CD14-positive monocyte (primary cell): ENCODE measurements at regions of chr17 and their contacts with region 1.

Region 1: GRCh38 chr17:59914274-59914854 is 21.4 kb downstream of the RPS6KB1 start:
- DNase-seq: peak; percentile 15 to 54 (median 37)
- H3K4me3 ChIP-seq: no peak overlapping the region
- H3K4me3 Mint-ChIP-seq: no peak overlapping the region
- H3K27ac ChIP-seq: no peak overlapping the region
- H3K27ac Mint-ChIP-seq: no peak overlapping the region
- H3K4me1 ChIP-seq: no peaks in the 10 kb centered on the region
- H3K4me1 Mint-ChIP-seq: peaks cover 1% of the 10 kb centered on the region
- H3K27me3 ChIP-seq: no peaks in the 10 kb centered on the region
- H3K27me3 Mint-ChIP-seq: no peaks in the 10 kb centered on the region
- CTCF ChIP-seq: peak; percentile 77

Region 2: DNA sequence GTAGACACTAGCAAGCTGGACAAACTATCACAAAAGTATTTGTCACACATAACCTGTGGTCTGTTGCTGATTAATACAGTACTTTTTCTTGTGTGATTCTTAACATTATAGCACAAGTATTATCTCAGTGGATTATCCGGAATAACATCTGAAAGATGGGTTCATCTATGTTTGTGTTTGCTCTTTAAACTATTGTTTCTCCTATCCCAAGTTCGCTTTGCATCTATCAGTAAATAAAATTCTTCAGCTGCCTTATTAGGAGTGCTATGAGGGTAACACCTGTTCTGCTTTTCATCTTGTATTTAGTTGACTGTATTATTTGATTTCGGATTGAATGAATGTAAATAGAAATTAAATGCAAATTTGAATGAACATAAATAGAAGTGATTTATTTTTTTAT is 35.7 kb after region 1 on chr17:
- intact Hi-C with region 1: loop called in 1 of 2 experiments (anchors 5 kb)
- DNase-seq: no peak
- H3K4me3 ChIP-seq: no peak overlapping the region
- H3K4me3 Mint-ChIP-seq: no peak overlapping the region
- H3K27ac ChIP-seq: no peak overlapping the region
- H3K27ac Mint-ChIP-seq: no peak overlapping the region
- H3K4me1 ChIP-seq: no peaks in the 10 kb centered on the region
- H3K4me1 Mint-ChIP-seq: no peaks in the 10 kb centered on the region
- H3K27me3 ChIP-seq: no peaks in the 10 kb centered on the region
- H3K27me3 Mint-ChIP-seq: no peaks in the 10 kb centered on the region
- CTCF ChIP-seq: no peak

Region 3: GRCh38 chr17:60036796-60037612 is 122.6 kb after region 1 on chr17:
- intact Hi-C with region 1: loop called (anchors 5 to 10 kb)
- DNase-seq: peak; percentile 46 to 58 (median 53)
- H3K4me3 ChIP-seq: no peak overlapping the region
- H3K4me3 Mint-ChIP-seq: peak overlapping the region in 1 of 2 donors; percentile 74
- H3K27ac ChIP-seq: no peak overlapping the region
- H3K27ac Mint-ChIP-seq: no peak overlapping the region
- H3K4me1 ChIP-seq: peaks cover 4 to 5% of the 10 kb centered on the region in 2 donors
- H3K4me1 Mint-ChIP-seq: peaks cover 4% of the 10 kb centered on the region
- H3K27me3 ChIP-seq: peaks cover 2 to 16% of the 10 kb centered on the region in 2 donors
- H3K27me3 Mint-ChIP-seq: peaks cover 11 to 21% (median 11%) of the 10 kb centered on the region in 3 donors
- CTCF ChIP-seq: peak; percentile 97